ENCODE measurements at regions of chr12 and their contacts with region 1.

Region 1: GRCh38 chr12:14995583-14996425 is 23.0 kb downstream of the PDE6H start:
- DNase-seq: peak; percentile 79
- ATAC-seq: no peak
- H3K4me3 ChIP-seq: no peak overlapping the region
- H3K27ac ChIP-seq: no peak overlapping the region
- H3K4me1 ChIP-seq: peaks cover 10% of the 10 kb centered on the region
- H3K27me3 ChIP-seq: no peaks in the 10 kb centered on the region
- CTCF ChIP-seq: peak; percentile 79
- POLR2A ChIP-seq: no peak
- RAD21 ChIP-seq: peak; percentile 83

Region 2: GRCh38 chr12:14629832-14630710 is 365.7 kb before region 1 on chr12:
- CTCF ChIA-PET with region 1: no interaction called
- POLR2A ChIA-PET with region 1: no interaction called
- dilution Hi-C with region 1: no loop called
- in situ Hi-C with region 1: no loop called
- intact Hi-C with region 1: loop called (anchors 2 kb)
- DNase-seq: peak; percentile 62
- ATAC-seq: peak; percentile 100
- H3K4me3 ChIP-seq: no peak overlapping the region
- H3K27ac ChIP-seq: no peak overlapping the region
- H3K4me1 ChIP-seq: no peaks in the 10 kb centered on the region
- H3K27me3 ChIP-seq: no peaks in the 10 kb centered on the region
- CTCF ChIP-seq: peak; percentile 92
- POLR2A ChIP-seq: no peak
- RAD21 ChIP-seq: peak; percentile 88

Region 3: GRCh38 chr12:14769969-14770495 is 225.8 kb before region 1 on chr12:
- CTCF ChIA-PET with region 1: no interaction called
- POLR2A ChIA-PET with region 1: no interaction called
- dilution Hi-C with region 1: no loop called
- in situ Hi-C with region 1: no loop called
- intact Hi-C with region 1: loop called (anchors 2 kb)
- DNase-seq: peak; percentile 68
- ATAC-seq: peak; percentile 42
- H3K4me3 ChIP-seq: peak overlapping the region; percentile 62
- H3K27ac ChIP-seq: peak overlapping the region; percentile 76
- H3K4me1 ChIP-seq: no peaks in the 10 kb centered on the region
- H3K27me3 ChIP-seq: no peaks in the 10 kb centered on the region
- CTCF ChIP-seq: peak; percentile 63
- POLR2A ChIP-seq: peak; percentile 63; the same call in 1 of the 2 replicates
- RAD21 ChIP-seq: peak; percentile 36; the same call in 1 of the 2 replicates

Region 4: GRCh38 chr12:14845350-14845750 is 150.5 kb before region 1 on chr12:
- CTCF ChIA-PET with region 1: interaction called, 13 read pairs
- POLR2A ChIA-PET with region 1: interaction called, 4 read pairs
- dilution Hi-C with region 1: no loop called
- in situ Hi-C with region 1: loop called (anchors 5 kb)
- intact Hi-C with region 1: loop called (anchors 1 kb)
- DNase-seq: peak; percentile 65
- ATAC-seq: peak; percentile 77
- H3K4me3 ChIP-seq: no peak overlapping the region
- H3K27ac ChIP-seq: no peak overlapping the region; the same call in 1 of the 2 replicates
- H3K4me1 ChIP-seq: peaks cover 3% of the 10 kb centered on the region; the same call in 1 of the 2 replicates
- H3K27me3 ChIP-seq: no peaks in the 10 kb centered on the region
- CTCF ChIP-seq: peak; percentile 85
- POLR2A ChIP-seq: no peak
- RAD21 ChIP-seq: peak; percentile 81

Region 5: DNA sequence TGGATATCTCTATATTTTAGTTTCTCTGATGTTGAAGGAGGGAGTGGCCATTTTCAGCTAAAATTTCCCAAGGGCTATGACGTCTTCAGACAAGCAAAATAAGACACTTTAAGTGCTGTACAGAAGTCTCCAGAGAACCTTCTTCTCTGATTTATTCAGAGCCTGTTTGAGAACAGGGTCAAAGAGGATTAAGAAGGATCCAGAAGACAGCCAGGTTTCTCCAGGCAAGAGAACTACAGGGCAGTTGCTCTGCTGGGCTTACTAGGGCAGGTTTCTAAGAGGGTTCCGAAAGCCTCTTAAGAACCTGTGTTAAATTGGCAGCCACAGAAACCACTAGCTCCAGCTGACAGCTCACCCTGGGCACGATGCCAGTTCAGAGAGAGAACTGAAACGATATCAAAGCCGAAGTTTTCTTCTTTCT is 111.3 kb before region 1 on chr12:
- CTCF ChIA-PET with region 1: no interaction called
- POLR2A ChIA-PET with region 1: no interaction called
- dilution Hi-C with region 1: no loop called
- in situ Hi-C with region 1: no loop called
- intact Hi-C with region 1: no loop called
- DNase-seq: peak; percentile 72
- ATAC-seq: peak; percentile 66
- H3K4me3 ChIP-seq: no peak overlapping the region
- H3K27ac ChIP-seq: no peak overlapping the region
- H3K4me1 ChIP-seq: peaks cover 8% of the 10 kb centered on the region; the same call in 1 of the 2 replicates
- H3K27me3 ChIP-seq: peaks cover 8% of the 10 kb centered on the region
- CTCF ChIP-seq: no peak
- POLR2A ChIP-seq: no peak
- RAD21 ChIP-seq: no peak

Region 6: GRCh38 chr12:15522565-15523187 is 526.9 kb after region 1 on chr12:
- CTCF ChIA-PET with region 1: no interaction called
- POLR2A ChIA-PET with region 1: no interaction called
- dilution Hi-C with region 1: no loop called
- in situ Hi-C with region 1: no loop called
- intact Hi-C with region 1: loop called (anchors 10 kb)
- DNase-seq: peak; percentile 34
- ATAC-seq: no peak
- H3K4me3 ChIP-seq: no peak overlapping the region
- H3K27ac ChIP-seq: no peak overlapping the region
- H3K4me1 ChIP-seq: no peaks in the 10 kb centered on the region
- H3K27me3 ChIP-seq: peaks cover 15% of the 10 kb centered on the region
- CTCF ChIP-seq: peak; percentile 61
- POLR2A ChIP-seq: no peak
- RAD21 ChIP-seq: peak; percentile 64

Region 7: DNA sequence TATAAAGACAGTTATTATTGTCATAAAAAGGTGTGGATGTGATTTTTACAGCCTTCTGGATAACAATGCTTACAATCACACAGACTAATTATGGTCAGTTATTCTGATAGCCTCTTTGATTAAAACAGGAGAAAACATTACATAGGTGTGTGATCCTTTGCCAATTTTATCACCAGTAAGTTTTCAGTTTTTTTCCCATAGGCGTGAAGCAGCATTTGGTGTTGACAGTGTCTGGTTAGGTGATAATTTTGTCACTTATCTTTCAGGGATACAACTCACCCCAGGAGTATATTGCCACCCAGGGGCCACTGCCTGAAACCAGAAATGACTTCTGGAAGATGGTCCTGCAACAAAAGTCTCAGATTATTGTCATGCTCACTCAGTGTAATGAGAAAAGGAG is 584.6 kb after region 1 on chr12:
- CTCF ChIA-PET with region 1: no interaction called
- POLR2A ChIA-PET with region 1: no interaction called
- dilution Hi-C with region 1: no loop called
- in situ Hi-C with region 1: no loop called
- intact Hi-C with region 1: no loop called
- DNase-seq: no peak
- ATAC-seq: no peak
- H3K4me3 ChIP-seq: no peak overlapping the region
- H3K27ac ChIP-seq: no peak overlapping the region
- H3K4me1 ChIP-seq: peaks cover 2% of the 10 kb centered on the region; the same call in 1 of the 2 replicates
- H3K27me3 ChIP-seq: no peaks in the 10 kb centered on the region; the same call in 1 of the 2 replicates
- CTCF ChIP-seq: no peak
- POLR2A ChIP-seq: no peak
- RAD21 ChIP-seq: no peak

Measured in IMR-90 (cell line).